ENCODE measurements at regions of chr6 and their contacts with region 1.

Region 1: GRCh38 chr6:25404693-25405169 is 125.6 kb downstream of the CARMIL1 start:
- DNase-seq: peak; percentile 14
- H3K4me3 Mint-ChIP-seq: peak overlapping the region; percentile 43
- H3K27ac Mint-ChIP-seq: peak overlapping the region; percentile 68
- H3K4me1 Mint-ChIP-seq: peaks cover 4% of the 10 kb centered on the region
- H3K27me3 Mint-ChIP-seq: no peaks in the 10 kb centered on the region

Region 2: DNA sequence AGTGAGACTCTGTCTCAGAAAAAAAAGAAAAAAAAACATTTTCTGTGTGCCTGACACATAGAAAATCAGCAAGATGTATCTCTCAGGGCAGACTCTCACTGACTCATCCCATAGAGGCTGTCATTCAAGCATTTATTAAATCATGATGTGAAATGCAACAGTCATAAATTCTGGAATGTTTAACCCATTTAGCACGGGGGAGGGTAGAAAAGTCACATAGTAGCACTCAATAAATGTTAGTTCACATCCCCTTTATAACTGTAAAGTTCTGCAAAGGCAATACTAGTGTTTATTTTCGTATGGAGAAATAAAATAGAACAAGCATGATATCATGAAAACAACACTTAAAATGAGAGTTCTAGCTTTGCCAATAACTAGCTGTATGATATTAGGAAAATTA is 141.1 kb before region 1 on chr6:
- intact Hi-C with region 1: no loop called
- DNase-seq: no peak
- H3K4me3 Mint-ChIP-seq: no peak overlapping the region
- H3K27ac Mint-ChIP-seq: no peak overlapping the region
- H3K4me1 Mint-ChIP-seq: peaks cover 2% of the 10 kb centered on the region
- H3K27me3 Mint-ChIP-seq: peaks cover 23% of the 10 kb centered on the region

Region 3: DNA sequence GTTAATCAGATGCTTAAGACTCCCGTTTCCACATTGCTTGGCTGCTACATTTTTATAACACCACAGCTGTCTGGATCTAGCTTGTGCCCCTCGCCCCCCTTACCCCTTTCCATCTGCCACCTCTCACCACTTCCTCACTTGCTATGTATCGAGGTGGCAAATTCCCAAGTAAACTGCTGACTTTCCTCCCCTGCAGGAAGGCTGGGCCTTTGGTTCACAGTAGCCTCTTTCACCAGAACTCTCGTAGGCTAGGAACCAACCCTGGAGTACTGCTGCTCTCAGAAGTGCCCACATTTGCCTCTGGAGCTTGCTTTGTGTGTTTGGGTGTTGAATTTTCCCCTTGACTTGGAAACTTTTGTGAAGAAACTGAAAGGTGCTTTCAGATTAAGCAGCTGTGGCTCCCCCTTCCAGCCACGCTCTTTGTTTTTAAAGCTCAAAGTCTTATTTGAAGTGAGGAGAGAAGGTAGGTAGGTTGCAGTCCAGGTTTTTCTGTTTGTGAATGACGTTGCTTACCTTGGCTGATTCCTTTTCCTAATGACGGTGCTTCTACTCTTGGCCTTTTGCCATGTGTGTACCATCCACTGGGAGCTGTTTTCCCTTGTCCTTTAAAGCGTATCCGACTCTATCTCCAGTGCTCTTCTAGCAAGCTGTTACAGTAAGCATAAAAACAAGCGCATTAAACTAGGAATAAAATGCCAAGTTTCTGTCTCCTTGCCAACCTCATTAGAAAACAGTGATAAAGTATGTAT is 35.1 kb before region 1 on chr6:
- intact Hi-C with region 1: loop called (anchors 2 kb)
- DNase-seq: no peak
- H3K4me3 Mint-ChIP-seq: peak overlapping the region; percentile 56
- H3K27ac Mint-ChIP-seq: peak overlapping the region; percentile 88
- H3K4me1 Mint-ChIP-seq: peaks cover 55% of the 10 kb centered on the region
- H3K27me3 Mint-ChIP-seq: no peaks in the 10 kb centered on the region

Measured in activated T-helper 2 cell treated with anti-CD3 and anti-CD28 coated beads, Interferon-gamma antibody, Interleukin-2, Interleukin-4, amounts not matched to agents 10 μg/mL and 5 μg/mL and 100 μg/mL, durations not matched to agents 14 hours and 24 hours and 36 hours (primary cell).